ENCODE measurements at regions of chr2 and their contacts with region 1.

Region 1: DNA sequence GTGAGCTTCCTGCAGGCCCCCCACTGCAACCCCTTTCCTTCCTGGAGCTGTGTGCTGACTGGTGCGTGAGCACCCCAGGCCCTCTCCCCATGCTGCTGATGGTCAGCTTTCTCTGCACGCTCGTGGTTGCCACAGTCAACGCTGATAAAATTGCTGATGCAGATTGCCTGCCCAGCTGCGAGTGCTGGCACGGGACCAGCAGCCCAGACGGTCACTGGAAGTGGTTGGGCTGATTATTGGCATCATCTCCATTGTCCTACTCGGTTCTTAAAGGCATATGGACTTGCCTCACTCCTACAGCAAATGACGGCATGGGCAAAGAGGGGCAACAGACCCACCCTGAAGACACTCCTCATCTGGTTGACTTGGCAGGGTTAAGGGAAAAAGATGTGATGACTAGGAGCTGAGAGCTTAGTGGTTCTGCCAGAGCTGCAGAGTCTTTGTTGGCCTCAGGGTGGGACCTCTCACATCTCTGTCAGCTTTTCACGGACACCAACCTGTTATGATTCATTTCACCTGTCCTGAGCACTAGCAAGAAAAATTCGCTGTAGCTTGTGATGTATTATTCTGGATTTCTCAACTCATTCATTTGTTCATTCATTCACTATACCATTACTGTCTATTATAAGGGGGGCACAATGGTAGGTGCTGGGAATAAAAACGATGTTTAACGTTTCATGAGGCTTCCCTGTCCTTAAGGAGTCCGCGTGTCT is 38.4 kb downstream of the PAX8 start:
- DNase-seq: peak; percentile 88
- ATAC-seq: peak; percentile 35
- H3K4me3 ChIP-seq: peak overlapping the region; percentile 54
- H3K27ac ChIP-seq: peak overlapping the region; percentile 98
- H3K4me1 ChIP-seq: peaks cover 50% of the 10 kb centered on the region
- H3K27me3 ChIP-seq: no peaks in the 10 kb centered on the region
- CTCF ChIP-seq: no peak

Region 2: GRCh38 chr2:113203901-113204519 is 36.3 kb before region 1 on chr2:
- CTCF ChIA-PET with region 1: interaction called, 10 read pairs
- POLR2A ChIA-PET with region 1: interaction called, 4 read pairs
- intact Hi-C with region 1: no loop called
- DNase-seq: peak; percentile 89
- ATAC-seq: peak; percentile 67
- H3K4me3 ChIP-seq: no peak overlapping the region
- H3K27ac ChIP-seq: 0 out of 2 replicates have a peak overlapping the region, but pooled peaks have one; percentile 5
- H3K4me1 ChIP-seq: peaks cover 18% of the 10 kb centered on the region
- H3K27me3 ChIP-seq: no peaks in the 10 kb centered on the region
- CTCF ChIP-seq: peak; percentile 92

Region 3: DNA sequence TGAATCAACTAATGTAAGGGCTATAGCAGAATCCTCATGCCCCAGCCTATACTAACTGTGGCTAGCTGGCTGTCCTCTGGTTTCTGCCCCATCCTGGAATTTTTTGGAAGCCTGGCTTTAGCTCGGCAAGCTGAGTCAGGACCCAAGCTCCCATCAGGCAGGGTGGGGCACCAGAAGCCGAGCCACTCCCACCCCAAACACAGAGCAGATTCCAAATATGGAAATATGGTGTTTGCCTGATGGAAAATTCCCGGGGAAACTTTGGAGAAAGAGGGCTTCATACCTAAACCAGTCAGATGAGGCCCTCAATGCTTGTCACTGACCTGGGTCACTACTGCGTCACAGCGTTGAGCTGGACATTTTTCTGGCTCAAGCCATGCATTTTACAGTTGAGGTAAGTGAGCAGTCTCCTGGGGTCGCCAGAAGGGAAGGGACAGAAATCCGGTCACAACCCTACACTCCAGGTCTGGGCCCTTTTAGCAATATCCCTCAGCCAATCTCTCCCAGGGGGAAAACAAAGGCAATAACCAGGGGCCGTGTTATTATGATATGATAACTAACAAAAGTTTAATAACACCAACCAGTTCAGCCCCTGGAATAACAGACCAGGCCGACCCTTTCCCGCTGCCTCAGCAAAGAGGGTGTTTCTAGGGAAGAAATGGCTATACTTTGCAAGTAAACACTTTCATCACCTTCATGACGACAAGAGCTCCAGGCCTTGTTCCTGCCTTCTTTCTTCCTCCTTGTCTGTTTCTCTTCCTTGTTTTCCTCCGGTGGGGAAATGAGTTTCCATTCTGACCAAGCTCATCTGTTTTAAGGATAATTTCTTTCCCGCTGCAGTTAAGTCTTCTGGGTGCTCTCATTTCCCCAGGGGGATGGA is 28.8 kb before region 1 on chr2:
- CTCF ChIA-PET with region 1: no interaction called
- POLR2A ChIA-PET with region 1: interaction called, 3 read pairs
- intact Hi-C with region 1: loop called (anchors 2 kb)
- DNase-seq: peak; percentile 82
- ATAC-seq: peak; percentile 90
- H3K4me3 ChIP-seq: no peak overlapping the region
- H3K27ac ChIP-seq: peak overlapping the region; percentile 47
- H3K4me1 ChIP-seq: peaks cover 20% of the 10 kb centered on the region
- H3K27me3 ChIP-seq: no peaks in the 10 kb centered on the region
- CTCF ChIP-seq: no peak